Esophagus muscularis mucosa (tissue), 4 donors: ENCODE measurements at regions of chr1 and their contacts with region 1.

Region 1: DNA sequence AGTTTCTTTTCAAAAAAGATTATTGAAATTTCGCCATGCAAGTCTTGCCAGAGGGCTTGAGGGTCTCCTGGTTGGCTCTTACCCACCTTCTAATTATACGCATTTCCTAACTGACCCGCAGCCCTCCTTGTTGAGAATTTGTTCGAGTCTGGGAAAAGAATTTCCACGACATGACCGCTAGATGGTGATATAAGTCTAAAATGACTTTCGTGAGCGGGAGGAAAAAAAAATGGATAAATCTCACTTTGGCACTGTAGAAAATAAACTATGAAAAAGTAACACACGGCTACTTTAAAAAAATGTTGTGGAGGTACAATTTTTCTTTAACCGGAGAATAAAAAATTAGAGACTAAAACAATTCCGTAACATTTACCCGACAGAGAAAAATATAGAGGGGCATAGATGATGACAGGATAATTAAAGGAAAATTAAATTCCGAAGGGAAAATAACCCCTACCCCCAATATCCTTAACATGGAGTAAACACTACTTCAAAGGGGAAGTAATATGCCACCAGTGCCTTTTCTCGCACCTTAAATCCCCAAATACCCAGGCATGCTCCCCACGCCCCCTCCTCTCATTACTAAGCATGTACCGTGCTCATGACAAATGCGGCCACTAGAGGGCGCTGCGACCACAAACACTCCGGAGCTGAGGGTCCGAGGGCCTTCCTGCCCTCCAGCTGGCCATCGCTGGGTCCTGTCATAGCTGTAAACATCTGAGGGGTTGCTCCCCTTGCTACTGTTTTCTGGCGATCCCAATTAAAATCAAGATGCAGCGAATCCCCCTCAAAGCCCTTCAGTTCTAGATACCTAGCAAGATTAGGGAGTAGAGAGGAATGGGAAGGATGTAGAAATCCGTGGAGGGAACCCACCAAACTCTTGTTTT is 266.9 kb downstream of the ASTN1 start:
- DNase-seq: no peak
- H3K4me3 ChIP-seq: peak overlapping the region; percentile 22 to 46 (median 29)
- H3K27ac ChIP-seq: no peak overlapping the region
- H3K4me1 ChIP-seq: peaks cover 4 to 10% (median 9%) of the 10 kb centered on the region in 4 donors
- H3K27me3 ChIP-seq: peaks cover 0 to 44% (median 0%) of the 10 kb centered on the region in 4 donors
- CTCF ChIP-seq: peak; percentile 54 to 66 (median 59)
- EP300 ChIP-seq: no peak
- POLR2A ChIP-seq: no peak

Region 2: GRCh38 chr1:176466514-176467220 is 430.9 kb before region 1 on chr1:
- intact Hi-C with region 1: no loop called
- DNase-seq: no peak
- H3K4me3 ChIP-seq: no peak overlapping the region
- H3K27ac ChIP-seq: no peak overlapping the region
- H3K4me1 ChIP-seq: no peaks in the 10 kb centered on the region
- H3K27me3 ChIP-seq: no peaks in the 10 kb centered on the region
- CTCF ChIP-seq: peak in 1 of 3 experiments; percentile 14
- EP300 ChIP-seq: no peak
- POLR2A ChIP-seq: no peak

Region 3: GRCh38 chr1:176820391-176821031 is 77.1 kb before region 1 on chr1:
- intact Hi-C with region 1: no loop called
- DNase-seq: no peak
- H3K4me3 ChIP-seq: no peak overlapping the region
- H3K27ac ChIP-seq: no peak overlapping the region
- H3K4me1 ChIP-seq: no peaks in the 10 kb centered on the region
- H3K27me3 ChIP-seq: no peaks in the 10 kb centered on the region
- CTCF ChIP-seq: no peak
- EP300 ChIP-seq: no peak
- POLR2A ChIP-seq: no peak

Region 4: GRCh38 chr1:176932114-176933104 is 34.8 kb after region 1 on chr1:
- intact Hi-C with region 1: no loop called
- DNase-seq: no peak
- H3K4me3 ChIP-seq: no peak overlapping the region
- H3K27ac ChIP-seq: no peak overlapping the region
- H3K4me1 ChIP-seq: peaks cover 0 to 6% (median 2%) of the 10 kb centered on the region in 4 donors
- H3K27me3 ChIP-seq: no peaks in the 10 kb centered on the region
- CTCF ChIP-seq: no peak
- EP300 ChIP-seq: no peak
- POLR2A ChIP-seq: no peak

Region 5: GRCh38 chr1:177181631-177182291 is 284.2 kb after region 1 on chr1:
- intact Hi-C with region 1: loop called (anchors 5 kb)
- DNase-seq: no peak
- H3K4me3 ChIP-seq: peak overlapping the region; percentile 5 to 49 (median 26)
- H3K27ac ChIP-seq: no peak overlapping the region
- H3K4me1 ChIP-seq: peaks cover 0 to 21% (median 13%) of the 10 kb centered on the region in 4 donors
- H3K27me3 ChIP-seq: peaks cover 0 to 38% (median 0%) of the 10 kb centered on the region in 4 donors
- CTCF ChIP-seq: peak; percentile 67 to 89 (median 76)
- EP300 ChIP-seq: no peak
- POLR2A ChIP-seq: no peak

Region 6: GRCh38 chr1:177780096-177780700 is 882.6 kb after region 1 on chr1:
- intact Hi-C with region 1: loop called (anchors 2 kb)
- DNase-seq: no peak
- H3K4me3 ChIP-seq: no peak overlapping the region
- H3K27ac ChIP-seq: no peak overlapping the region
- H3K4me1 ChIP-seq: peaks cover 0 to 5% (median 1%) of the 10 kb centered on the region in 4 donors
- H3K27me3 ChIP-seq: no peaks in the 10 kb centered on the region
- CTCF ChIP-seq: peak; percentile 48 to 60 (median 57)
- EP300 ChIP-seq: no peak
- POLR2A ChIP-seq: no peak

Region 7: GRCh38 chr1:177858332-177858821 is 960.8 kb after region 1 on chr1:
- intact Hi-C with region 1: no loop called
- DNase-seq: no peak
- H3K4me3 ChIP-seq: no peak overlapping the region
- H3K27ac ChIP-seq: no peak overlapping the region
- H3K4me1 ChIP-seq: peaks cover 0 to 8% (median 2%) of the 10 kb centered on the region in 4 donors
- H3K27me3 ChIP-seq: no peaks in the 10 kb centered on the region
- CTCF ChIP-seq: no peak
- EP300 ChIP-seq: no peak
- POLR2A ChIP-seq: no peak